Left ventricle myocardium inferior (tissue), 1 donor: ENCODE measurements at regions of chr6 and their contacts with region 1.

Region 1: DNA sequence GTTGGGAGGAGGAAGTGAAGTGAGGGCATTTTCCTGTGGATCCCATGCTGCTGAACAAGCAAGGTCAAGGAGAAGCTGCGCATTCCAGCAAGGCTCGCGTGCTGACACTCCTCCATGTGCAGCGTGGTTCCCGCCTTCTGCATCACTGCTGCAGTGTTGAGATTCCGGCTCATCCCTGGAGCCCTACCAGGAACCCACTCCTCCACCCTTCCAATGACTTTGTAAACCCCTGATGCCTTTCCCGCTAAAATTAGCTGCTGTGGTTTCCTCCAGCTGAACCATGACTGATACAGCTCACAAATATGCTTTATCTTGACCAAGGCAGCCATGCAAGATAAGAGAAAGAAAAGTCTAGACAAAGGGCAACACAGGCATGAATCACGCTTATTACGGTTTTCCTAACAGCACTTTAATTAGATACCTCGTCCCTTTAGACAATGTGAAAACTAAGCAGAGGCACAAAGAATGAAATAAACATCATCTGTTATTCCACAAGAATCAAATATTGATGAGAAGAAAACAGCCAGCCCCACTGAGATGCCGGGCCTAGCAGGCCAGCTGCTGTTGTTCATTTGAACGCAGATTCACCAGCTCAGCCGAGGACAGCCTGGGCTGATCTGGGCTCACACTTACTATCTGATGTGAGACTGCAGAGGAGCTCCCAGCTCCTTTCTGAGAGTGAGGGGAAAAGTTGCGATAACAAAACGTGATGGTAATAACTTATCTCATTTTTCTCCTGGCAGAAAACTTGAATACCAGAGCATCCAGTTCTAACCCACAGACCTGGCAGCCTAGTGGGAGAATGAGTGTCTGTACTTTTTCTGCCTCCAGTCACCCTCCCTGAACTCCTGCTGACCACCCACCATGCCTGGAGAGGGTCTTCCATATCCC is 14.2 kb upstream of the BNIP5 start:
- DNase-seq: no peak
- H3K4me3 ChIP-seq: no peak overlapping the region
- H3K27ac ChIP-seq: no peak overlapping the region
- H3K4me1 ChIP-seq: peaks cover 20% of the 10 kb centered on the region
- H3K27me3 ChIP-seq: peaks cover 85% of the 10 kb centered on the region
- CTCF ChIP-seq: no peak

Region 2: GRCh38 chr6:36302227-36302976 is 48.5 kb before region 1 on chr6:
- intact Hi-C with region 1: loop called (anchors 10 kb)
- DNase-seq: peak; percentile 77
- H3K4me3 ChIP-seq: no peak overlapping the region
- H3K27ac ChIP-seq: no peak overlapping the region
- H3K4me1 ChIP-seq: peaks cover 4% of the 10 kb centered on the region
- H3K27me3 ChIP-seq: peaks cover 51% of the 10 kb centered on the region
- CTCF ChIP-seq: peak; percentile 95